Sigmoid colon (tissue), 7 donors: ENCODE measurements at regions of chr1 and their contacts with region 1.

Region 1: GRCh38 chr1:6646499-6647148 is 22.0 kb downstream of the THAP3 start:
- DNase-seq: no peak
- H3K4me3 ChIP-seq: no peak overlapping the region
- H3K27ac ChIP-seq: no peak overlapping the region
- H3K4me1 ChIP-seq: peaks cover 0 to 3% (median 0%) of the 10 kb centered on the region in 4 donors
- H3K27me3 ChIP-seq: no peaks in the 10 kb centered on the region
- CTCF ChIP-seq: peak; percentile 5 to 61 (median 48)
- EP300 ChIP-seq: no peak
- POLR2A ChIP-seq: no peak

Region 2: GRCh38 chr1:6454856-6455751 is 191.5 kb before region 1 on chr1:
- intact Hi-C with region 1: no loop called
- DNase-seq: no peak
- H3K4me3 ChIP-seq: no peak overlapping the region
- H3K27ac ChIP-seq: no peak overlapping the region
- H3K4me1 ChIP-seq: peaks cover 0 to 21% (median 2%) of the 10 kb centered on the region in 4 donors
- H3K27me3 ChIP-seq: peaks cover 11 to 95% (median 64%) of the 10 kb centered on the region in 3 donors
- CTCF ChIP-seq: no peak
- EP300 ChIP-seq: no peak
- POLR2A ChIP-seq: no peak

Region 3: GRCh38 chr1:6489799-6490180 is 156.8 kb before region 1 on chr1:
- intact Hi-C with region 1: loop called (anchors 5 kb)
- DNase-seq: no peak
- H3K4me3 ChIP-seq: peak overlapping the region; percentile 40 to 68 (median 52)
- H3K27ac ChIP-seq: peak overlapping the region in 3 of 4 donors; percentile 53 to 76 (median 66)
- H3K4me1 ChIP-seq: peaks cover 0 to 39% (median 35%) of the 10 kb centered on the region in 4 donors
- H3K27me3 ChIP-seq: peaks cover 15 to 37% (median 16%) of the 10 kb centered on the region in 3 donors
- CTCF ChIP-seq: peak; percentile 50 to 90 (median 71)
- EP300 ChIP-seq: no peak
- POLR2A ChIP-seq: no peak

Region 4: GRCh38 chr1:6502000-6502891 is 144.4 kb before region 1 on chr1:
- intact Hi-C with region 1: no loop called
- DNase-seq: peak; percentile 81
- H3K4me3 ChIP-seq: no peak overlapping the region
- H3K27ac ChIP-seq: no peak overlapping the region
- H3K4me1 ChIP-seq: peaks cover 0 to 9% (median 8%) of the 10 kb centered on the region in 4 donors
- H3K27me3 ChIP-seq: peaks cover 0 to 19% (median 0%) of the 10 kb centered on the region in 3 donors
- CTCF ChIP-seq: no peak
- EP300 ChIP-seq: no peak
- POLR2A ChIP-seq: no peak